MCF 10A (cell line): ENCODE measurements at regions of chr1 and their contacts with region 1.

Region 1: GRCh38 chr1:215114154-215114933 is 31.8 kb downstream of the KCNK2 start:
- DNase-seq: peak; percentile 100
- H3K4me3 Mint-ChIP-seq: peak overlapping the region; percentile 45
- H3K27ac Mint-ChIP-seq: peak overlapping the region; percentile 91
- H3K4me1 Mint-ChIP-seq: peaks cover 56% of the 10 kb centered on the region
- H3K27me3 Mint-ChIP-seq: no peaks in the 10 kb centered on the region
- CTCF ChIP-seq: no peak

Region 2: DNA sequence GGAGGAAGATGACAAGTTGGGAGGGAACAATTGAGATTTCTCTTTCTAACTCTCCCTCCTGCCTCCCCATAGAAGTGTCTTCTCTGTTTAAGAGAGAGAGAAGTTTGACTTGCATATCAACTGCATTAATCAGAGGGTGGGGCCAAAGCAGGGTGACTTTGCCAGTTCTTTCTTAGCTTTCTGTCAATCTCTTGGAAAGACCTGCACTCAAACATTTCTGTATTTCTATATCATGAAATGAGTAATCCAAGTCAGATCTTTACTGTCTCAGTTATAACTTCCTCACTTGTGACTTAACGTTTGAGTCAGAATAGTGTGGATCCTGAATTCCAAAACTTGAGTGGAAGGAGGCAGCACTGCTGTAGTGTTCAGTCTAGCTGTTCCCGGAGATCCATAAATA is 212.6 kb before region 1 on chr1:
- CTCF ChIA-PET with region 1: interaction called, 5 read pairs
- POLR2A ChIA-PET with region 1: interaction called, 6 read pairs
- intact Hi-C with region 1: loop called (anchors 5 kb)
- DNase-seq: peak; percentile 83
- H3K4me3 Mint-ChIP-seq: peak overlapping the region; percentile 13
- H3K27ac Mint-ChIP-seq: peak overlapping the region; percentile 88
- H3K4me1 Mint-ChIP-seq: peaks cover 36% of the 10 kb centered on the region
- H3K27me3 Mint-ChIP-seq: no peaks in the 10 kb centered on the region
- CTCF ChIP-seq: no peak

Region 3: DNA sequence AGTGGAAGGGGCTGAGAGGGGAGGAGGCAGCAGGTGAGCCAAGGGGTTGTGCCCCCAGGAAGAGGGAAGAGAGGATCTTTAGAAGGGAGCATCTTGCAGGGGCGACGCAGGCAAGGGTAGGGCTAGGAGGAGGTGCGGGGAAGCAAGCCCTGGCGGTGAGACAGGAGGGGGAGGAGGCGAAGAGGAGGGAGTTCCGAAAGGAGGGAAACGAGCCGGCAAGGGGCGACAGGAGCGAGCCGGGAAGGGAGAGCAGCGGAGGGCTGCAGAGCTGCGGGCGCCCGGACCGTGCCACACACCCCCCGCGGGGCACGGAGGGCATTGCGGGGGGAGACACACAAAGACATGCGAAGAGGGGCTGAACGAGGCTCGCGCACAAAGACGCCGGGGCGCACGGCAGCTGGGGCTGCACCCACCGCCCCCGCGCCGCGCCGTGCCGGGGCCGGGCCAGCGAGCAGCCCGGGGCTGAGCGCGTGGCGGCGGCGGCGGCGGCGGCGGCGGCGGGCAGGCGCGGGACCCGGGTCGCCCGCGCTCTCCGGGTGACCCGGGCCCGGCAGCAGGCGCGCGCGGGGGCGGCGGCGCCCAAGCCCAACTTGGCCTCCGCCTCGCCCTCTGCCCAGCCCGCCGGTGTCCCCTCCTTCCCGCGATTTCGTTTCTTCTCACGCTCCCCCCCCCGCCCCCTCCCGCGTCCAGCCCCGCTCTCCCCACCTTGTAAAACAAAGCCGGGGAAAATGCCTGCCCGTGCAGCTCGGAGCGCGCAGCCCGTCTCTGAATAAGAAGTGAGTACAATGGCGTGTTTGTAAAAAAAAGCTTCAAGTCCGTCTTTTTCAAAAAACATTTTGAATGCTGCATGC is 31.6 kb before region 1 on chr1 and contains the start of gene KCNK2:
- CTCF ChIA-PET with region 1: interaction called, 5 read pairs
- POLR2A ChIA-PET with region 1: interaction called, 5 read pairs
- intact Hi-C with region 1: loop called (anchors 1 kb)
- DNase-seq: peak; percentile 25
- H3K4me3 Mint-ChIP-seq: peak within 1 kb of the TSS; percentile 77
- H3K27ac Mint-ChIP-seq: peak within 1 kb of the TSS; percentile 57
- H3K4me1 Mint-ChIP-seq: peaks cover 21% of the 10 kb centered on the region
- H3K27me3 Mint-ChIP-seq: no peaks in the 10 kb centered on the region
- CTCF ChIP-seq: no peak
- total RNA-seq, gene KCNK2: 2.9 and 5.7 TPM in 2 replicates

Region 4: DNA sequence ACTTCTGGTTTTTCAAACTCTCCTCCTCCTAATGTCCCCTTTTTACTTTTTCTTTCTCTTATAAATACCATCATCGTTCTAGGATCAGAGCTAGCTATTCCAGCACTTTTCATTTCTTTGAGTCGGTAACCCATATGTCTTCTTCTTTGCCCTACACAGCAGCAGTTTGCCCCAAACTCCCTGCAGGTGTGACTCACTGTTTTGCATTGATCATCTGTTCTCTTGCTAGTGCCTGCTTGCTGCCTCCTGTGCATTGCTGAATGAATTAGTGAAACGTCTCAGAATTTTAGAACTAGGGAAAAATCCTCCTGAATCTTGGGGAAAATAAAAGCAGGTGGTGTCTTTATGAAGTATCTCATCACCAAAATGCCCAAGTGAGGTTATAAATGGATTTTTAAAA is 10.1 kb before region 1 on chr1:
- CTCF ChIA-PET with region 1: no interaction called
- POLR2A ChIA-PET with region 1: interaction called, 13 read pairs
- intact Hi-C with region 1: no loop called
- DNase-seq: peak; percentile 54
- H3K4me3 Mint-ChIP-seq: no peak overlapping the region
- H3K27ac Mint-ChIP-seq: peak overlapping the region; percentile 34
- H3K4me1 Mint-ChIP-seq: peaks cover 6% of the 10 kb centered on the region
- H3K27me3 Mint-ChIP-seq: no peaks in the 10 kb centered on the region
- CTCF ChIP-seq: no peak

Region 5: GRCh38 chr1:215132156-215132555 is 17.8 kb after region 1 on chr1:
- CTCF ChIA-PET with region 1: interaction called, 7 read pairs
- POLR2A ChIA-PET with region 1: interaction called, 54 read pairs
- intact Hi-C with region 1: no loop called
- DNase-seq: peak; percentile 44
- H3K4me3 Mint-ChIP-seq: no peak overlapping the region
- H3K27ac Mint-ChIP-seq: no peak overlapping the region
- H3K4me1 Mint-ChIP-seq: peaks cover 21% of the 10 kb centered on the region
- H3K27me3 Mint-ChIP-seq: no peaks in the 10 kb centered on the region
- CTCF ChIP-seq: no peak